Left lung (tissue), 14 donors: ENCODE measurements at regions of chr9 and their contacts with region 1.

Region 1: GRCh38 chr9:124537926-124538325 is 30.7 kb upstream of the NR5A1 start:
- DNase-seq: no peak
- ATAC-seq: no peak
- H3K4me3 ChIP-seq: no peak overlapping the region
- H3K27ac ChIP-seq: no peak overlapping the region
- H3K4me1 ChIP-seq: peaks cover 0 to 6% of the 10 kb centered on the region in 2 donors
- H3K27me3 ChIP-seq: no peaks in the 10 kb centered on the region
- CTCF ChIP-seq: no peak

Region 2: DNA sequence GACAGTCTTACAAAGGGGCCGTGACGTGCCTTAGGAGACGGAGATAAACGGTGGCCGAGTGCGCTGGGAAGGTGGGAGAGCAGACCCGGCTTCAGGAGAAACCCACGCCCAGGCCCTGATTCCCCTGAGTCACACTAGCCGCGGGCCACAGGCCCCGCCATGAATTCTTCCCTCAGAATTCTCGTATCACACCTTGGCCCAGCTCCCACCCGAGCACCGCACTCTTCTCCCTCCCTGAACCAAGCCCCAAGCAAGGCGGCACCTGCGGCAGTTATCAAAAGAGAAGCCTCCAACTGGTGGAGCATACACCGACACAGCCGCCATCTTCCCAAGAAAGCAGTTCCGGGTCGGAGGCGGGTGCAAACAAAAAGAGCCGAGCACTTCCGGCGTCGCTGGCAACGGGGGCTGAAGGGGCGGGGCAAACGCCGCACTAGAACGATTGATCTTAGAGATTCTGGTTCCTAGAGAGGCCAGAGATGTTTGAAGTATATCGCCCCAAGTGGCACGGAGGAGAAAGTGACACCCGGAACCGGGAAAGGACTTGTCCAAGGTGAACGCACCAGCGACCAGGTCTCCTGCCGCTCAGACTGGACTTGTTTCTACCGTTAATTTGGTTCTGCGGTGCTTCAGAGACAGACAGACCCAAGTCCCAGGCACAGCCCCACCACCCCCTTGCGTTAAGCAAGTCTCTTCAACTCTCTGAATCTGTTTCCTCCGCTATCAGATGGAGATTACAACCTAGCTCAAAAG is 122.6 kb before region 1 on chr9 and contains the start of gene PSMB7:
- intact Hi-C with region 1: loop called in 1 of 2 experiments (anchors 5 kb)
- DNase-seq: peak; percentile 92 to 96 (median 95)
- ATAC-seq: peak; percentile 97
- H3K4me3 ChIP-seq: peak within 1 kb of the TSS; percentile 73 to 81
- H3K27ac ChIP-seq: peak within 1 kb of the TSS in 1 of 2 donors; percentile 52
- H3K4me1 ChIP-seq: peaks cover 10 to 37% of the 10 kb centered on the region in 2 donors
- H3K27me3 ChIP-seq: no peaks in the 10 kb centered on the region
- CTCF ChIP-seq: peak; percentile 69 to 86
- polyA plus RNA-seq, gene PSMB7: 185 to 220 (median 204) TPM